Panc1 (cell line): ENCODE measurements at regions of chr7 and their contacts with region 1.

Region 1: GRCh38 chr7:86904949-86905834 is 154.3 kb downstream of the ELAPOR2 start:
- DNase-seq: no peak
- ATAC-seq: no peak
- H3K4me3 ChIP-seq: no peak overlapping the region
- H3K27ac ChIP-seq: no peak overlapping the region
- H3K4me1 ChIP-seq: no peaks in the 10 kb centered on the region
- H3K27me3 ChIP-seq: no peaks in the 10 kb centered on the region; the same call in 1 of the 2 replicates
- CTCF ChIP-seq: peak; percentile 75

Region 2: GRCh38 chr7:85554236-85555178 is 1350.7 kb before region 1 on chr7:
- CTCF ChIA-PET with region 1: interaction called, 11 read pairs
- POLR2A ChIA-PET with region 1: no interaction called
- in situ Hi-C with region 1: no loop called
- intact Hi-C with region 1: no loop called
- DNase-seq: peak; percentile 50
- ATAC-seq: peak; percentile 62; the same call in 1 of the 2 replicates
- H3K4me3 ChIP-seq: no peak overlapping the region
- H3K27ac ChIP-seq: no peak overlapping the region
- H3K4me1 ChIP-seq: no peaks in the 10 kb centered on the region
- H3K27me3 ChIP-seq: no peaks in the 10 kb centered on the region
- CTCF ChIP-seq: peak; percentile 69; the same call in 1 of the 2 replicates

Region 3: DNA sequence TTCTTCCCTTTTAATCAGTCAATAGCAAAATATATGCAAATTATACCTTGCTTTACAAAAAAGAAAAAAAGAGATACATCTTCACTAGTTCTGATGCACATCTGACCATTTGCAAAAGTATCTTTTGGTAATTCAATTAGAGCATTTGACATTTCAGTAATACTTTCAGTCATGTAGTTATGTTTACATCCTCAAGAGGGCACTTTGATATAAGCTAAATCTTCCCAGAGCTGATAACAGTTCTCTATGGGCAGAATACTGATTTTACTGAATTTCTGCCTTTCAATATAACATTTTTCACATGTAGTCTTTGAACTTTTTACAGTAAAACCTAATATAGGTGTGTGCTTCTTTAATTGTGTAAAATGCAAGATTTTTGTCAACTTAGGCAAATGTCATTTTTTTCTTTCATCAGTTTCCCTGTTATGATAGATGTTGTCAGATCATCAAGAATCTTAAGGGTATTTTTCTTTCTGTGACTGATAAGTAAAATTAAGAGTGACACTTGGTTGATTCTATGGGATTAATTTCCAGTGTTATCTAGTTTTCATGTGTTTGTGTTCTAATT is 1014.9 kb before region 1 on chr7:
- CTCF ChIA-PET with region 1: no interaction called
- POLR2A ChIA-PET with region 1: no interaction called
- in situ Hi-C with region 1: no loop called
- intact Hi-C with region 1: loop called (anchors 2 kb)
- DNase-seq: peak; percentile 12
- ATAC-seq: peak; percentile 69; the same call in 1 of the 2 replicates
- H3K4me3 ChIP-seq: no peak overlapping the region
- H3K27ac ChIP-seq: no peak overlapping the region
- H3K4me1 ChIP-seq: no peaks in the 10 kb centered on the region
- H3K27me3 ChIP-seq: no peaks in the 10 kb centered on the region
- CTCF ChIP-seq: peak; percentile 56; the same call in 1 of the 2 replicates

Region 4: DNA sequence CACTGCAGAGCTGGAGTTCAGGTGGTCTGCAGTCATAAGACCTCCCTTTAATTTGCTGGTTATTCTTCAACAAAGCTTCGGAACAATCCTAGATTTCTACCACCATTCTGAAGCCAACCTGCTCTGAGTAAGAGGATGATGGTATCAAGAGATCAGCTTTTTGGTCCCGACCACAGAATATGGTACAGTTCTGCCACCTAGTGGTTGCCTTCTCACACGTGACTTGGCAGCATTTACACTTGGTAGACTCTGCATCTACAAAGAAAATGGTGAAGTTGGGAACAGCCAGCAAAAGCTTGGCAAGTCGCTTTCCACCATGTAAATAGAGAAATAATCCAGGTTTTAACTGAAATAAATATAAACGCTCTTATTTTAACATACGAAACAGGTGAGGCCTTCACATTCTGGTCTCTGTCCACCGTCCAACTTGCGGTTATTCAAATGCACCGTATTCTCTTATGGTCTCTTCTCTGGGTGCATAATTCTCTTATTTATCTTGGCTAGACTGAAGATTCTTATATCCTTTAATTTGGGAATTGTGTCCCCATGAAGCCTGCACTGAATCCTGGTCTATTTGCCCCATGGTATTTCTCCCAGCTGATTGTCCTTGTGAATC is 435.4 kb before region 1 on chr7:
- CTCF ChIA-PET with region 1: no interaction called
- POLR2A ChIA-PET with region 1: no interaction called
- in situ Hi-C with region 1: no loop called
- intact Hi-C with region 1: loop called (anchors 10 kb)
- DNase-seq: peak; percentile 76
- ATAC-seq: peak; percentile 75; the same call in 1 of the 2 replicates
- H3K4me3 ChIP-seq: no peak overlapping the region
- H3K27ac ChIP-seq: no peak overlapping the region
- H3K4me1 ChIP-seq: no peaks in the 10 kb centered on the region
- H3K27me3 ChIP-seq: no peaks in the 10 kb centered on the region
- CTCF ChIP-seq: peak; percentile 82

Region 5: DNA sequence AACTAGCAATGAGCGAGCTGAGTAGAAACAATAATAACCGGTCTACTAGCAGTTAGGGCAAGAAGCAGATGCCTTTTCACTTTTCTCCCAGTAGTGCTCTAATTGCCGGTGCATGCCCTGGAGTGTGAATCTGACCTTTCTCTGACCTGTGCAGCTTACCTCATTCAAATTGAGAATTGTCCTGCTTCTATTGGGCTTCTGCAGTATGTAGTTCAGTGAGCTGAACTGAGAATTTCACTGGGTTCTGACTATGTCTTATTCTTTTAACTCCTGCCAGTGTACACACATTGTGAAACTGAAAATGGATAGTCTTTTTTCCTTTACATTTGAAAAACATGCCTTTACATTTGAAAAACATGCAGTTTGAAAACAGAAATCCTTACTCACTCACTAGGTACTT is 419.4 kb before region 1 on chr7:
- CTCF ChIA-PET with region 1: no interaction called
- POLR2A ChIA-PET with region 1: no interaction called
- in situ Hi-C with region 1: no loop called
- intact Hi-C with region 1: no loop called
- DNase-seq: no peak
- ATAC-seq: no peak
- H3K4me3 ChIP-seq: no peak overlapping the region
- H3K27ac ChIP-seq: no peak overlapping the region
- H3K4me1 ChIP-seq: no peaks in the 10 kb centered on the region
- H3K27me3 ChIP-seq: no peaks in the 10 kb centered on the region
- CTCF ChIP-seq: no peak

Region 6: DNA sequence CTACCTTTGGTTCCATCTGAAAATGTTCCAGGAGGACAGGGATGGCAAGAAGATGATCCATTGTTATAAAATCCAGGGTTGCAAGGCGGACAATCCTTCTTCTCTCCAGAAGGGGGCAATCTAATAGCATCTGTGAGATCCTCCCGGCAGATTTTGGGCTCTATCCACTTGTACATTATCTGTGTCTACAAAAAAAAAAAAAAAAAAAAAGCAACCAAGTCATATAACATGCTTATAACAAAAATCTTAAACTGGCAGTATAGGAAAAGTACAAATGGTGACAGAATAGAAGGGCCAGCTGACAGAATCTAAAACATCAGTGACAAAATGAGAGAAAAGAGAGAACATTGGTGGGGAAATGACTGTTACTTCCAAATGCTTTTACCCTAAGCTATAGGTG is 21.5 kb after region 1 on chr7:
- CTCF ChIA-PET with region 1: no interaction called
- POLR2A ChIA-PET with region 1: no interaction called
- in situ Hi-C with region 1: no loop called
- intact Hi-C with region 1: no loop called
- DNase-seq: no peak
- ATAC-seq: peak; percentile 65; the same call in 1 of the 2 replicates
- H3K4me3 ChIP-seq: no peak overlapping the region
- H3K27ac ChIP-seq: no peak overlapping the region
- H3K4me1 ChIP-seq: no peaks in the 10 kb centered on the region
- H3K27me3 ChIP-seq: peaks cover 3% of the 10 kb centered on the region; the same call in 1 of the 2 replicates
- CTCF ChIP-seq: peak; percentile 78